ENCODE measurements at regions of chr15 and their contacts with region 1.

Region 1: GRCh38 chr15:52679232-52680040 is at the start of gene ATOSA:
- DNase-seq: peak; percentile 94
- ATAC-seq: peak; percentile 63
- H3K4me3 ChIP-seq: peak within 1 kb of the TSS; percentile 87 to 92 (median 88)
- H3K4me3 Mint-ChIP-seq: peak within 1 kb of the TSS; percentile 99
- H3K27ac ChIP-seq: peak within 1 kb of the TSS; percentile 92 to 97
- H3K27ac Mint-ChIP-seq: peak within 1 kb of the TSS; percentile 99
- H3K4me1 ChIP-seq: peaks cover 51 to 65% of the 10 kb centered on the region in 2 donors
- H3K4me1 Mint-ChIP-seq: peaks cover 76% of the 10 kb centered on the region
- H3K27me3 ChIP-seq: no peaks in the 10 kb centered on the region
- H3K27me3 Mint-ChIP-seq: no peaks in the 10 kb centered on the region
- CTCF ChIP-seq: no peak
- total RNA-seq, gene ATOSA: 198 and 206 TPM in 2 replicates

Region 2: DNA sequence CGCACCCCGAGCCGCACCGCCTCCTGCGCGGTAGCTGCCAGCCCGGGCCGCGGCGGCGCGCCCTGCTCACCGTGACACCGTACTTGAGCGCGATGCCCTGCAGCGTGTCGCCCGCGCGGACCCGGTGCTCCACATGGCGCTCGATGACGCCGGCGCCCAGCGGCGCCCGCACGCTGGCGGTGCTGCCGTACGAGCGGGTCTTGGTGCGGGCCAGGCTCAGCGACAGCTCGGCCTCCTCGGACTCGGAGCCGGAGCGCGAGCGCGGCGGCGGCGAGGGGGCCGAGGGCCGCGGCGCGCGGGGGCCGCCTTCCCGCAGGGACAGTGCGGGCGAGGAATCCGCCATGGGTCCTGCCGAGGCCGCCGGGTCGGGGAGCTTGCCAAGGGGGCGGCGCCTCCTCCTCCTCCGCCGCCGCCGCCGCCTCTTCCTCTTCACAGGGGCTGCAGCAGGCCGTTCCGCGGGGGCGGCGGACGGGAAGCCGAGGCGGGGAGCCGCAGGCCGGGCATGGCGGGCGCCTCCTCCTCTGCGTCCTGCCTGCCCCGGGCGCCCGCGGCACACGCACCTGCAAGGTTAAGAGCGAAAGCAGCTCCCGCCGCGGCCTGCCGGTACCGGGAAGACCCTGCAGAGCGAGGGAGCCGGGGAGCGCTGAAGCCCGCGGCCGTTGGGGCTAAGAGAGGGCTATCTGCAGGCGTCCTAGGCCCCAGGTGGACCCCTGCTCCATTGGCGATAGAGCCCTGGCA is 942.0 kb before region 1 on chr15 and contains the start of gene LYSMD2:
- CTCF ChIA-PET with region 1: no interaction called
- POLR2A ChIA-PET with region 1: no interaction called
- intact Hi-C with region 1: loop called (anchors 10 kb)
- DNase-seq: peak; percentile 82
- ATAC-seq: peak; percentile 67
- H3K4me3 ChIP-seq: peak within 1 kb of the TSS; percentile 68 to 93 (median 73)
- H3K4me3 Mint-ChIP-seq: peak within 1 kb of the TSS; percentile 98
- H3K27ac ChIP-seq: peak within 1 kb of the TSS; percentile 87 to 89
- H3K27ac Mint-ChIP-seq: peak within 1 kb of the TSS; percentile 95
- H3K4me1 ChIP-seq: peaks cover 49 to 53% of the 10 kb centered on the region in 2 donors
- H3K4me1 Mint-ChIP-seq: peaks cover 55% of the 10 kb centered on the region
- H3K27me3 ChIP-seq: no peaks in the 10 kb centered on the region
- H3K27me3 Mint-ChIP-seq: no peaks in the 10 kb centered on the region
- CTCF ChIP-seq: no peak
- total RNA-seq, gene LYSMD2: 48.2 and 49.4 TPM in 2 replicates

Region 3: GRCh38 chr15:52466134-52466701 is 213.2 kb before region 1 on chr15:
- CTCF ChIA-PET with region 1: no interaction called
- POLR2A ChIA-PET with region 1: no interaction called
- intact Hi-C with region 1: loop called (anchors 1 kb)
- DNase-seq: peak; percentile 94
- ATAC-seq: peak; percentile 99
- H3K4me3 ChIP-seq: no peak overlapping the region
- H3K4me3 Mint-ChIP-seq: peak overlapping the region; percentile 33
- H3K27ac ChIP-seq: peak overlapping the region; percentile 43 to 65
- H3K27ac Mint-ChIP-seq: peak overlapping the region; percentile 78
- H3K4me1 ChIP-seq: peaks cover 34 to 37% of the 10 kb centered on the region in 2 donors
- H3K4me1 Mint-ChIP-seq: peaks cover 49% of the 10 kb centered on the region
- H3K27me3 ChIP-seq: no peaks in the 10 kb centered on the region
- H3K27me3 Mint-ChIP-seq: no peaks in the 10 kb centered on the region
- CTCF ChIP-seq: peak; percentile 62

Region 4: GRCh38 chr15:52636459-52636858 is 43.0 kb before region 1 on chr15:
- CTCF ChIA-PET with region 1: no interaction called
- POLR2A ChIA-PET with region 1: no interaction called
- intact Hi-C with region 1: loop called (anchors 5 kb)
- DNase-seq: no peak
- ATAC-seq: no peak
- H3K4me3 ChIP-seq: no peak overlapping the region
- H3K4me3 Mint-ChIP-seq: no peak overlapping the region
- H3K27ac ChIP-seq: no peak overlapping the region
- H3K27ac Mint-ChIP-seq: no peak overlapping the region
- H3K4me1 ChIP-seq: no peaks in the 10 kb centered on the region
- H3K4me1 Mint-ChIP-seq: peaks cover 3% of the 10 kb centered on the region
- H3K27me3 ChIP-seq: no peaks in the 10 kb centered on the region
- H3K27me3 Mint-ChIP-seq: no peaks in the 10 kb centered on the region
- CTCF ChIP-seq: no peak

Region 5: DNA sequence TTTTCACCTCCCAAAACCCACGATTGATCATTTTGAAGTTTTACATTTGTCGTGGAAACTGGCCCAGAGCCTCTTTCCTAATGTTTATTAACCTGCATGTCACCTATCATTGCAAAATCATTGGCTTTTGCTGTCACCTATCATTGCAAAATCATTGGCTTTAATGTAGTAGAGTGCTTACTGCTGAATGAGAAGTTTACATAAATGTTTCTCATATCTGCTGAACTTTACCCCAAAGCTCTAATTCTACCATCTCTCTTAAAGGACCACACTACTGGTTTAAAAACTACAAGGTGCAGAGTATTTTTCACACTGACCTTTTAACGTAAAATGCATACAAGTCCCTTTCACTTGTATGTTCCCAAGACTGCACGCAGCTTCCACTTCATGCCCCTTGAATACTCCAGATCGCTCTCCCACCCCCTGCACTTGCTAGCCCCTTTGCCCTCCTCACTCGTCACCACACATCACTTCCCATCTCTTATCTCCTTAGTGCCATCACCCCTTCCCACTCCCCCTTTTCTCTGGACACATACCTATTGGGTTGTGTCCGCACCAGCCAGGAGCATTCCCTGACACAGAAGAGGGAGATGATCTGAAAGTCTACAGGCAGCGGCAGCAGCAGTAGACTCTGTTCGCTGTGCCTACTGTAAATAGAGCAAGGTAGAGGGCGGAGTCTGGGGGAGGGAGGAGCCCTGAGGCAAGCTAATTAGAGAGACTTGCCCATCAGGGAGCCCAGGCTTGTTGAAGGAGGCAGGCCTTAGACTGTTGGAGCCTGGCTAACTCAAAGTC is 29.9 kb after region 1 on chr15:
- CTCF ChIA-PET with region 1: interaction called, 23 read pairs
- POLR2A ChIA-PET with region 1: interaction called, 7 read pairs
- intact Hi-C with region 1: loop called (anchors 1 kb)
- DNase-seq: peak; percentile 73
- ATAC-seq: peak; percentile 100
- H3K4me3 ChIP-seq: peak overlapping the region; percentile 6 to 57 (median 52)
- H3K4me3 Mint-ChIP-seq: peak overlapping the region; percentile 94
- H3K27ac ChIP-seq: peak overlapping the region; percentile 83 to 87
- H3K27ac Mint-ChIP-seq: peak overlapping the region; percentile 93
- H3K4me1 ChIP-seq: peaks cover 23 to 35% of the 10 kb centered on the region in 2 donors
- H3K4me1 Mint-ChIP-seq: peaks cover 54% of the 10 kb centered on the region
- H3K27me3 ChIP-seq: no peaks in the 10 kb centered on the region
- H3K27me3 Mint-ChIP-seq: no peaks in the 10 kb centered on the region
- CTCF ChIP-seq: no peak

Measured in B cell (primary cell).